ENCODE measurements at regions of chr3 and their contacts with region 1.

Region 1: GRCh38 chr3:197029511-197030167 is at the start of gene MELTF:
- DNase-seq: peak in 1 of 2 experiments; percentile 92
- H3K4me3 ChIP-seq: peak within 1 kb of the TSS; percentile 46 to 74 (median 52)
- H3K27ac ChIP-seq: no peak within 1 kb of the TSS
- H3K4me1 ChIP-seq: peaks cover 0 to 4% (median 4%) of the 10 kb centered on the region in 4 experiments; a peak in 4 of 7 replicates
- H3K27me3 ChIP-seq: peaks cover 9 to 21% (median 19%) of the 10 kb centered on the region in 4 experiments
- CTCF ChIP-seq: peak in 2 of 3 experiments; percentile 74 to 80; a peak in 3 of 4 replicates
- EP300 ChIP-seq: no peak
- POLR2A ChIP-seq: no peak
- RAD21 ChIP-seq: peak; percentile 41 to 74; a peak in 3 of 4 replicates
- total RNA-seq, gene MELTF: 3.5 and 3.7 TPM in 2 replicates

Region 2: DNA sequence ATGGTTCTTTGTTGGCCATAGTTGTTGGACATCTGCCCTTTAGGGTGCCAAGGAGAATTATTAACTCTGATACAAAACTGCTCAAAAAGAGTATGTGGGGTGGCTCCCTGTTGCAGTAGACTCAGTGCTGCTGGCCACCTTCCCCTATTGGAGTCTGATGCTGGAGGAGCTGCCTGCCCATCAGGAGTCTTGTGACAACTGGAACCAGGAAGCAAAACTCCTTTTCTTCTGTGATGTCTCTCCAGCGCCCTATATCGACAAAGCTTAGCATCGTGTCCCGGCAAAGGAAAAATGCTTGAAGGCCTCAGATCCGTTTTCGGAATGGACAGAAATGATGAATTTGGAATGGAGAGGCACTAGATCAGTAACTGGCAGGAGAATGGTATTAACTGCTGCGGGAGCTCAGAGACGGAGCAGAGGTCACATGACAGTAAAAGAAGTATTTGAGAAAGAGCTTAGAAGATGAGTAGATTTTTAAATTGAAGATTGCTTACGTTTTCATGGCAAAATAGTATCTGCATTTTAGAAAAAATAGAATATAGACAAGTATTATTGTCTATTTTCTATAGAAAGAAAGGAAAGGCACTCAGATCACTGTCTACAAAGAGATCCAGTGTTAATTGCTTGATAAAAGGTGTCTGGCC is 266.3 kb before region 1 on chr3:
- CTCF ChIA-PET with region 1: no interaction called
- POLR2A ChIA-PET with region 1: no interaction called
- DNase-seq: no peak
- H3K4me3 ChIP-seq: no peak overlapping the region
- H3K27ac ChIP-seq: no peak overlapping the region
- H3K4me1 ChIP-seq: no peaks in the 10 kb centered on the region
- H3K27me3 ChIP-seq: no peaks in the 10 kb centered on the region; a peak in 1 of 7 replicates
- CTCF ChIP-seq: no peak
- EP300 ChIP-seq: no peak
- POLR2A ChIP-seq: no peak
- RAD21 ChIP-seq: no peak

Region 3: DNA sequence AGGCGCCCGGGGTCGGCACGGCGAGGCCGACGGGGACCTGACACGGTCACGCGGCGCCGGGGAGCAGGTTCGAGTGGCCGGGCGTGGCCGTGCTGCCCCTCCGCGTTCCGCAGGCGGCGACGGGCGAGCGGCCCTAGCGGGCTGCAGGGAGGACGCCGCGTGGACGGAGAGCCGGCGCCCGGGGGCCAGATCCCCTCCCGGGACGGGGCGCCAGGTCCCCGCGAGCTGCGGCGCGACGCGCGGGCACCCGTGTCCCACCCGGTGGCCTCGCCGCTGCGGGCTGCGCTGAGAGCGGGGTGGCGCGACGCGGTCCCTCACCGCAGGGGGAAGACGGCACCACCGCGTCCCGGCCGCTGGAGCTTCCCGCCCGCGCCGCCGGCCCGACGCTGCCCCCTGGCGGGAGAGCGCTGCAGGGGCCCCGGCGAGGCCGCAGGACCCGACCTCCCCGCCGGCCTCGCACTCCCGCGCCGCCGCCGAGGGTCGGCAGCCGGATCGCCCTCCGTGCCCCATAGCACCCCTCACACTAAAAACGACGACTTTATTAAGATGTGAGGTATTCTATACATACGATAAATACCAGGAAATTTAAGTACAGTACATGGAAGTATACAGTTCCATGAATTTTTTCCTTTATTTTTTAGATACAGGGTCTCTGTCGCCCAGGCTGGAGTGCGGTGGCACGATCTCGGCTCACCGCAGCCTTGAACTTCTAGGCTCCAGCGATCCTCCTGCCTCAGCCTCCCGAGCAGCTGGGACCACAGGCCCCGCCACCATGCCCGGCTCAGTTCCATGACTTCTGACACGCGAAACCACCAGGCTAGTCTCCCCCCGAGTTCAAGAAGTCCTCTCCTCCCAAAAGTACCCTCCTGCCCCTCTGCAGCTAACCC is 59.7 kb before region 1 on chr3:
- CTCF ChIA-PET with region 1: interaction called, 10 read pairs
- POLR2A ChIA-PET with region 1: no interaction called
- DNase-seq: peak in 1 of 2 experiments; percentile 87
- H3K4me3 ChIP-seq: peak overlapping the region; percentile 26 to 74 (median 31); a peak in 7 of 8 replicates
- H3K27ac ChIP-seq: no peak overlapping the region
- H3K4me1 ChIP-seq: peaks cover 0 to 24% (median 10%) of the 10 kb centered on the region in 4 experiments; a peak in 5 of 7 replicates
- H3K27me3 ChIP-seq: peaks cover 52 to 66% (median 63%) of the 10 kb centered on the region in 4 experiments
- CTCF ChIP-seq: peak; percentile 73 to 96 (median 78)
- EP300 ChIP-seq: no peak
- POLR2A ChIP-seq: no peak
- RAD21 ChIP-seq: peak; percentile 50 to 83

Region 4: GRCh38 chr3:196979545-196979944 is 50.1 kb before region 1 on chr3:
- CTCF ChIA-PET with region 1: interaction called, 20 read pairs
- POLR2A ChIA-PET with region 1: no interaction called
- DNase-seq: no peak
- H3K4me3 ChIP-seq: no peak overlapping the region
- H3K27ac ChIP-seq: no peak overlapping the region
- H3K4me1 ChIP-seq: no peaks in the 10 kb centered on the region; a peak in 1 of 7 replicates
- H3K27me3 ChIP-seq: no peaks in the 10 kb centered on the region
- CTCF ChIP-seq: no peak
- EP300 ChIP-seq: no peak
- POLR2A ChIP-seq: no peak
- RAD21 ChIP-seq: no peak

Region 5: DNA sequence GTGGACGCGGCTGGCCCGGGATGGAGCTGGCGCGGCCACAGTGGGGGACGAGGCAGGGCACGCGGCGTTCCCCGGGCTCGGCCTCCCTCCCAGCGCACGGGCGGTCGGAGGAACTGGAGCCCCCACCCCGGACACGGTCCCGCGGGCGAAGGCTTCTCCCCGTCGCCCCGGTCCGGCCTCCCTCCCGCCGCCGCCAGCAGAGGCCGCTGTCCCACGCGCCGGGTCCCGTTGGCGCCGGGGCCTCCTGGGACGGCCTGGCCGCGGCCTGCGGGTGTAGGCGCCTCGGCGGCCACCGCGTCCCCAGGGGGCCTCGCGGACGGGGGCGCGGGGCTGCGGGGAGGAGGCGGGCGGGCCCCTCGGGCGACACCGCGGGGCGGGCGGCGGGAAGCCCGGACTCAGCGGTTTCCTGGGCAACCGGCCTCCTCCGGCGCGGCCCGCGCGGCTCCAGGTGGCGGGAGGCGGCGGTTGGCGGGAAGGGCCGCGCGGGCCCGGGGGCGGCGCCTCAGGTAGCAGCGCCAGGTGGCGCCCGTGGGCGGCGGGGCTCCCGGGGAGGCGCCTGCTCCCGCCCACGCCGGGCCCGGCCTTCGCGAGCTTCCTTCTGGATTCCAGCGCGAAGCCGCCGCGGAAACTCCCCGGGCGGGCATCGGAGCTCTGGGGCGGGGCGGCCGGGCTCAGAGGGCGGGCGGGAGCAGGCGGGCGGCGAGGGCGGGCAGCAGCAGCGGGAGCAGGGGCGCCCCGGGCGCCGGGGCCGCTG is 26.8 kb before region 1 on chr3:
- CTCF ChIA-PET with region 1: interaction called, 245 read pairs
- POLR2A ChIA-PET with region 1: interaction called, 6 read pairs
- DNase-seq: peak in 1 of 2 experiments; percentile 81
- H3K4me3 ChIP-seq: peak overlapping the region; percentile 27 to 79 (median 40); a peak in 6 of 8 replicates
- H3K27ac ChIP-seq: no peak overlapping the region
- H3K4me1 ChIP-seq: peaks cover 3 to 10% (median 6%) of the 10 kb centered on the region in 4 experiments
- H3K27me3 ChIP-seq: peaks cover 0 to 17% (median 17%) of the 10 kb centered on the region in 4 experiments; a peak in 6 of 7 replicates
- CTCF ChIP-seq: peak in 2 of 3 experiments; percentile 61 to 66; a peak in 3 of 4 replicates
- EP300 ChIP-seq: peak in 1 of 2 experiments; percentile 42; a peak in 1 of 3 replicates
- POLR2A ChIP-seq: no peak; a peak in 1 of 3 replicates
- RAD21 ChIP-seq: peak; percentile 30 to 69

Region 6: DNA sequence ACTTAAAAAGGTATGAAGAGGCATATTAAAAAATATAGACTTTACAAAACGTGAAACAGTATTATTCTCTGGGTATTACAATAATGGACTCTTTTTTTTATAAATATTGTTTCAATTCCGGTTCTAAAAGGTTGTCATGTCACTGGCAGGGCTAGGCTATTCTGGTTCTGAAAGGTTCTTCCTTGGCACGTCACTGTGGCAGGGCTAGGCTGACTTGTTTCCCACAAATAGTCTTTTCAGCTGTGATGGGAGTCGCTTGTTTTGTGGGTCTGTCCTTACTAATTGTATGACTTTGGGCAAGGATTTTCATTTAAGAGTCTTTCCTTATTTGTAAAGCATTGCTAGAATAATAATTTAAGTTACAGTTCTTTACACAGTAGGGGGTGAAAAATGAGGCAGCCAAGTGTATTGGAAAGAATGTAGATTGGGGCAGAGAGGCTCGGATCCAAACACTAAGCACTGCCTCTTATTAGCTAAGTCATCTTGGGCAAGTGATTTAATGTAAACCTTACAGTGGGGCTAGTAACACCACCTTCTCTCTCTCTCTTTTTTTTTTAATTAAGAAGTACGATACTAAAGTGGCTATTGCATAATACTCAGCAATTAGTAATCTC is 12.3 kb after region 1 on chr3:
- CTCF ChIA-PET with region 1: interaction called, 15 read pairs
- POLR2A ChIA-PET with region 1: interaction called, 4 read pairs
- DNase-seq: no peak
- H3K4me3 ChIP-seq: no peak overlapping the region
- H3K27ac ChIP-seq: no peak overlapping the region
- H3K4me1 ChIP-seq: no peaks in the 10 kb centered on the region
- H3K27me3 ChIP-seq: no peaks in the 10 kb centered on the region
- CTCF ChIP-seq: no peak
- EP300 ChIP-seq: no peak
- POLR2A ChIP-seq: no peak
- RAD21 ChIP-seq: no peak